ENCODE measurements at regions of chr16 and their contacts with region 1.

Region 1: DNA sequence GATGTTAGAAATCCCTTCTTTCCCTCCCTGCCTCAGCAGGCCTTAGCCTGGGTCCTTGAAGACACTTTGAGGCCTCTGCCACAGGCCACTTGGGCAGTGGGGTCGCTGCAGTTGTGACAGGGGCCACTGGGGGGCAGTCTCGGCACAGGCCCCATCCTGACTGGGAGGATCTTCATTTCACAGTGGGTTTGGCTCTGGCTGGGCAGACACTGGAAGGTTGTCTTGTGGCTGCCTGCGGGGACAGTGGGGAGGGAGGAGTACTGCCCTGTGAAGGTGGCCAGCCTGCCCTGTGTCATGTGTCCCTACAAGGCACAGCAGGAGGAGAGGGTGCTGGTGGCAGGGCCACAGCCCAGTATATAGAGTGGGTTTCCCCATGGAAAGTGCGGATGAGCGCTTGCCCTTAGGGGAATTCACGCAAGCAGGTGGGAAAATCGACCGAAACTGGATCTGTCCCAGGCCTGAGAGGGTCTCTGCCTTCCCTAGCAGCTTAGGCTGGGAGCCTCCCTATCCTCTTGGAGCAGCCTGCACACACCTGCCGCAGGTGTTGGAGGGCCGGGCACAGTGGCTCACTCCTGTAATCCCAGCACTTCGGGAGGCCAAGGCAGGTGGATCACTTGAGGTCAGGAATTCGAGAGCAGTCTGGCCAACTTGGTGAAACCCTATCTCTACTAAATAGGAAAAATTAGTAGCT is 28.8 kb downstream of the GINS2 start:
- DNase-seq: peak; percentile 57 to 98
- H3K4me3 ChIP-seq: no peak overlapping the region
- H3K27ac ChIP-seq: no peak overlapping the region
- H3K4me1 ChIP-seq: no peaks in the 10 kb centered on the region; a peak in 1 of 7 replicates
- H3K27me3 ChIP-seq: no peaks in the 10 kb centered on the region
- CTCF ChIP-seq: peak; percentile 91 to 98 (median 97)
- EP300 ChIP-seq: no peak
- POLR2A ChIP-seq: no peak
- RAD21 ChIP-seq: peak; percentile 68 to 82

Region 2: DNA sequence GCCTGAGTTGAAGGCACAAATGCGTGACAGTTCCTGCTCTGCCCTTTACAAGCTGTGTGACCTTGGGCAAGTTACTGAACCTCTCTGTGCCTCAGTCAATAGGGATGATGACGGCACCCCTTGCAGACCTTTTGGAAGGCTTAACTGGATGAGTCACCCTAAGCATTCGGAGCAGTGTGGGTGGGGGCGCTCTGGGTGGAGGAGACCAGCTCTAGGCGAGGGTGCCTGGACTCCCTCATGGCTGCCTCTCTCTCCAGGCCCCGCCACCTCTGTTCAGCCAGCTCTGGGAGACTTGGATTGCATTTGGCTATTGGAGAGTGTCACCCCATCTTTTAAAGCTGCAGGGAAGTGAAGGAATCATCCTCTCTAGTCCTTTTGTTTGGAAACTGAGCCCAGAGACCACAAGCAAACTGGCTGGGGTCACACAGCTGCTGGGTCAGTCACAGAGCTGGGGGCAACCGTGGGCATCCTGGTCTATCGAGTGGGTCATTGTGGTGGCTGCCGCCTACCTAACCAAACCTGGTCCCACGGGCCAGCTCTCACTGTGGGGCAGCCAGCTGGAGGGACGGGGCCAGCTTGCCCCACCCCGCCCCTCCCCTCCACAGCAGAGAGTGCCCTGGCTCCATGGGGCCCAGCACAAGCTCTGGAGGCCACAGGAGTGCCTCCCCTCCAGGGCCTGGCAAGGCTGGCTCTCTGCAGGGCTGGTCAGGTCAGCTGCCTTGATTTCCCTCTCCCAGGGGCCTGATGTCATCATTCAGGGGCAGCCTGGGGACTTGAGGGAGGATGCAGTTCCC is 67.1 kb before region 1 on chr16:
- CTCF ChIA-PET with region 1: no interaction called
- POLR2A ChIA-PET with region 1: no interaction called
- DNase-seq: no peak
- H3K4me3 ChIP-seq: no peak overlapping the region
- H3K27ac ChIP-seq: no peak overlapping the region
- H3K4me1 ChIP-seq: peaks cover 5 to 25% (median 17%) of the 10 kb centered on the region in 4 experiments
- H3K27me3 ChIP-seq: 0 out of 7 replicates have a peak, but pooled peaks cover 0 to 3% (median 0%) of the 10 kb centered on the region in 4 experiments
- CTCF ChIP-seq: no peak
- EP300 ChIP-seq: no peak
- POLR2A ChIP-seq: no peak
- RAD21 ChIP-seq: no peak

Region 3: GRCh38 chr16:85634747-85635544 is 25.0 kb before region 1 on chr16:
- CTCF ChIA-PET with region 1: interaction called, 17 read pairs
- POLR2A ChIA-PET with region 1: no interaction called
- DNase-seq: no peak
- H3K4me3 ChIP-seq: no peak overlapping the region
- H3K27ac ChIP-seq: no peak overlapping the region
- H3K4me1 ChIP-seq: peaks cover 0 to 11% (median 0%) of the 10 kb centered on the region in 4 experiments; a peak in 4 of 7 replicates
- H3K27me3 ChIP-seq: no peaks in the 10 kb centered on the region
- CTCF ChIP-seq: peak in 2 of 3 experiments; percentile 57 to 66; a peak in 3 of 4 replicates
- EP300 ChIP-seq: no peak
- POLR2A ChIP-seq: no peak
- RAD21 ChIP-seq: no peak; a peak in 1 of 4 replicates

Region 4: GRCh38 chr16:85642762-85643358 is 17.1 kb before region 1 on chr16:
- CTCF ChIA-PET with region 1: interaction called, 23 read pairs
- POLR2A ChIA-PET with region 1: no interaction called
- DNase-seq: no peak
- H3K4me3 ChIP-seq: no peak overlapping the region
- H3K27ac ChIP-seq: no peak overlapping the region
- H3K4me1 ChIP-seq: peaks cover 0 to 5% (median 0%) of the 10 kb centered on the region in 4 experiments; a peak in 4 of 7 replicates
- H3K27me3 ChIP-seq: no peaks in the 10 kb centered on the region
- CTCF ChIP-seq: no peak
- EP300 ChIP-seq: no peak
- POLR2A ChIP-seq: no peak
- RAD21 ChIP-seq: no peak

Region 5: GRCh38 chr16:85675251-85675927 is 15.4 kb after region 1 on chr16:
- CTCF ChIA-PET with region 1: interaction called, 248 read pairs
- POLR2A ChIA-PET with region 1: interaction called, 7 read pairs
- DNase-seq: no peak
- H3K4me3 ChIP-seq: no peak overlapping the region
- H3K27ac ChIP-seq: no peak overlapping the region
- H3K4me1 ChIP-seq: no peaks in the 10 kb centered on the region
- H3K27me3 ChIP-seq: no peaks in the 10 kb centered on the region
- CTCF ChIP-seq: peak in 2 of 3 experiments; percentile 47 to 68; a peak in 2 of 4 replicates
- EP300 ChIP-seq: no peak
- POLR2A ChIP-seq: peak in 1 of 2 experiments; percentile 46; a peak in 2 of 3 replicates
- RAD21 ChIP-seq: peak; percentile 35 to 55

Region 6: DNA sequence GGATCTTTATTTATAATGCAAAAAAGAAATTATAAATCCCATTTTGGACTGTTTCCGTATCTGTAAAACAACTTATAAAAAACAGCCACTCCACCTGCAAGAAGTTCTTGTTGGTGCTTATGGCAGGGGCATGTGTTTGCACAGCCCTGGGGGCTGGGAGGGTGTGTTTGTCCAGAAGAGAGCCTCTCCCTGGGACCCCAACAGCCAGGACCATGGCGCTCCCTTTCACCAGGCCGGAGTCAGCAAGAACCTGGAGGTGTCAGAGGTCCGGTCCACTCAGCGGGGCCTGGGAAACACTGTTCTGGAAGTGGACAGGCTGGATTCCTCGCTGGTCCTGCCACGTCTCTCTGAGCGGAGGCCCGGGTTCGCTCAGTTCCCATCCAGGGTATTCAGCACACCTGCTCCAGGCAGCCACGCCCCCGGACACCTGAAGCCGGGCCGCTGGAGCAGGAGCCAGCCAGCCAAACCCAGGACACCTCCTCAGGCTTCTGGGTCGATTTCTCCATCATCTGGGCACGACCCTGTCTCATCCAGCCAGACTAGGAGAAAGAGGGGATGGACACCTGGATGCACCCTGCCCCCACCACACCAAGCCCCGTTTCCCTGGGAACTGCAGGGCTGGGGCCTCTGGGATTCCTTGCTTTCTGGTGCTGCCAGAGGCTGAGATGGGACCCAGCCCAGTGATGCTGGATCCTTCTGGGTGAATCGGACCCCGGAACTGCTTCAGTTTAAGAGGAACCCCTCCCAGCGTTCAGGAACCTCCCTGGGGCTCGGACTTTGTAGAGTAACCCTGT is 47.8 kb after region 1 on chr16:
- CTCF ChIA-PET with region 1: interaction called, 11 read pairs
- POLR2A ChIA-PET with region 1: no interaction called
- DNase-seq: no peak
- H3K4me3 ChIP-seq: no peak overlapping the region
- H3K27ac ChIP-seq: no peak overlapping the region
- H3K4me1 ChIP-seq: no peaks in the 10 kb centered on the region
- H3K27me3 ChIP-seq: no peaks in the 10 kb centered on the region
- CTCF ChIP-seq: no peak
- EP300 ChIP-seq: no peak
- POLR2A ChIP-seq: no peak
- RAD21 ChIP-seq: no peak